MCF 10A (cell line): ENCODE measurements at regions of chr12 and their contacts with region 1.

Region 1: GRCh38 chr12:101839324-101840283 is 8.8 kb upstream of the GNPTAB start:
- DNase-seq: peak; percentile 70
- H3K4me3 Mint-ChIP-seq: no peak overlapping the region
- H3K27ac Mint-ChIP-seq: no peak overlapping the region
- H3K4me1 Mint-ChIP-seq: no peaks in the 10 kb centered on the region
- H3K27me3 Mint-ChIP-seq: no peaks in the 10 kb centered on the region
- CTCF ChIP-seq: peak; percentile 83

Region 2: DNA sequence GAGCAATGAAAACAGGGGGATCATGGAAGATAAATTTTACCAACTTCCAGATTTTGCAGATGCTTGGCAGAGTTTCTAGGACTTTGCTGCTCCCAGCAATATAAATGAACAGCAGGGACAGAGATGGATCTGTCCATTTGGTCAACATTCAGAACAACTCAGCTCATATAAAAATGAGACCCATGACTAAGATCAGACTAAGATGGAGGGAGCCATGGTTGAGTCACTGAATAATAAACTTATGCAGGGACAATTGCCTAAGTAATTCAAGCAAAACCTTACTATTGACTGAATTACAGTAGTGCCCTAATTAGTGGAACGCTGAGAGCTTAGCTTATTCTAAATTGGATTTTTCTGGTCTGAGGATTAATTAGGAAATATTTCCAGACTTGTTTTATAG is 834.7 kb before region 1 on chr12:
- CTCF ChIA-PET with region 1: no interaction called
- POLR2A ChIA-PET with region 1: no interaction called
- intact Hi-C with region 1: no loop called
- DNase-seq: no peak
- H3K4me3 Mint-ChIP-seq: no peak overlapping the region
- H3K27ac Mint-ChIP-seq: no peak overlapping the region
- H3K4me1 Mint-ChIP-seq: peaks cover 6% of the 10 kb centered on the region
- H3K27me3 Mint-ChIP-seq: no peaks in the 10 kb centered on the region
- CTCF ChIP-seq: no peak

Region 3: GRCh38 chr12:101414533-101415119 is 425.0 kb before region 1 on chr12:
- CTCF ChIA-PET with region 1: interaction called, 7 read pairs
- POLR2A ChIA-PET with region 1: no interaction called
- intact Hi-C with region 1: loop called (anchors 1 kb)
- DNase-seq: peak; percentile 77
- H3K4me3 Mint-ChIP-seq: no peak overlapping the region
- H3K27ac Mint-ChIP-seq: no peak overlapping the region
- H3K4me1 Mint-ChIP-seq: no peaks in the 10 kb centered on the region
- H3K27me3 Mint-ChIP-seq: no peaks in the 10 kb centered on the region
- CTCF ChIP-seq: peak; percentile 46

Region 4: DNA sequence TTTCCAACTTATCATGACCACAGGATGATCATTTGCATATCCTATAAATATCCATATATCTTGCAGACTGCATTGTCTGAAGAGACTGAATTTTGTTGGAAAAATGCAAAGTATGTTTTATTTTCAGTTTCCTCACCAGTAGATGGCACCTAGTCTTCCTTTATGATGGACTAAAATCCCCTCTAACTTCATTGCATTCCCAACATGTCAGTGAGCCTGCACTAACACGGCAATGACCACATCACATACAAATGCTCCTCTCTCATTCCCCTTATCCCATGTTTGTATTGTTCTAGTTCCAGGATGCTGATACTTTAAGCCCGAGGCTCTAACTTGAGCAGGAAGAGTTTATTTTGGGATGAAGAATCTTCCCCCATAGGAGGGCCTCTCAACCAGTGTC is 269.6 kb before region 1 on chr12:
- CTCF ChIA-PET with region 1: interaction called, 4 read pairs
- POLR2A ChIA-PET with region 1: no interaction called
- intact Hi-C with region 1: loop called (anchors 2 kb)
- DNase-seq: peak; percentile 41
- H3K4me3 Mint-ChIP-seq: no peak overlapping the region
- H3K27ac Mint-ChIP-seq: no peak overlapping the region
- H3K4me1 Mint-ChIP-seq: peaks cover 12% of the 10 kb centered on the region
- H3K27me3 Mint-ChIP-seq: no peaks in the 10 kb centered on the region
- CTCF ChIP-seq: peak; percentile 36

Region 5: DNA sequence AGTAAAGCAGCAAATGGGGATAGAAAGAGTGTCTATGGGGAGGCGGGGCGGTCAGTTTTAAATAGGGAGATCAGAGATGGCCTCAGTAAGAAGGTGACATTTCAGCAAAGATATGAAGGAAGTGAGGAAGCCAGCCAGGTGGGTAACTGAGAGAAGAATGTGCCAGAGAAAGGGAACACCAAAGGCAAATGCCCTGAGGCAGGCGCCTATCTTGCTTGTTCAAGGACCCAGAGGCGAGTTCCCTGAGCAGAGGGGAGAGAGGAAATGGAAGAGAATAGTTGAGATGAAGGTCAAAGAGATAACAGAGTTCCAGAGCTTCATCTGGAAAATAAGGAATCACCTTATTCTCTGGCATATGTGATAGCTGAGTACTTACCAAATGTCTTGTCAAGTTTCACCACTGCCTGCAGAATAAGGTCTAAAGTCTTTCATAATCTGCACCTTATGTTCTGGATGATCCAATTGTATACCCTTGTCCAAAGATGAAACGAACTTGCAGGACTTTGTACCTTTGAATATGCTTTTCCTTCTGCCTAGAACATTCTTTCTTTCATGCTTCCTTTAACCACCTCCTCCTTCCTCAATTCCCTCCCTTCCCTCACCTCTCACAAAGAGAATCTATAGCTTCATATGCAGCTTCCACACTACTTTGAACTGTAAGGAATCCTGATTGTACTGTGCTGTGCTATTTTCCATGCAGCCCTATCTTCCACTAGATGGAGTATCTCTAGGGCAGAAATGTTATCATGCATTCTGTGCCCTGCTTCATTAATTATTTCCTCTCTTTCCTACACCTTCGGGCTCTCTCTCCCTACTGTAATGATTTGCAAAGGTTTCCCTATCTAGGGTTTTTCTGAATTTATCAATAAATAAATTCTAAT is 47.3 kb before region 1 on chr12:
- CTCF ChIA-PET with region 1: interaction called, 29 read pairs
- POLR2A ChIA-PET with region 1: interaction called, 4 read pairs
- intact Hi-C with region 1: loop called (anchors 2 kb)
- DNase-seq: peak; percentile 4
- H3K4me3 Mint-ChIP-seq: no peak overlapping the region
- H3K27ac Mint-ChIP-seq: no peak overlapping the region
- H3K4me1 Mint-ChIP-seq: no peaks in the 10 kb centered on the region
- H3K27me3 Mint-ChIP-seq: no peaks in the 10 kb centered on the region
- CTCF ChIP-seq: no peak

Region 6: GRCh38 chr12:101854747-101855146 is 15.1 kb after region 1 on chr12:
- CTCF ChIA-PET with region 1: interaction called, 65 read pairs
- POLR2A ChIA-PET with region 1: interaction called, 7 read pairs
- intact Hi-C with region 1: no loop called
- DNase-seq: no peak
- H3K4me3 Mint-ChIP-seq: no peak overlapping the region
- H3K27ac Mint-ChIP-seq: peak overlapping the region; percentile 29
- H3K4me1 Mint-ChIP-seq: peaks cover 21% of the 10 kb centered on the region
- H3K27me3 Mint-ChIP-seq: no peaks in the 10 kb centered on the region
- CTCF ChIP-seq: no peak

Region 7: GRCh38 chr12:101859664-101860607 is 20.3 kb after region 1 on chr12:
- CTCF ChIA-PET with region 1: interaction called, 65 read pairs
- POLR2A ChIA-PET with region 1: interaction called, 7 read pairs
- intact Hi-C with region 1: no loop called
- DNase-seq: no peak
- H3K4me3 Mint-ChIP-seq: no peak overlapping the region
- H3K27ac Mint-ChIP-seq: peak overlapping the region; percentile 40
- H3K4me1 Mint-ChIP-seq: peaks cover 24% of the 10 kb centered on the region
- H3K27me3 Mint-ChIP-seq: no peaks in the 10 kb centered on the region
- CTCF ChIP-seq: no peak